ENCODE measurements at regions of chr7 and their contacts with region 1.

Region 1: GRCh38 chr7:48035301-48035966 is at the start of gene C7orf57:
- DNase-seq: peak; percentile 92
- ATAC-seq: peak; percentile 100
- H3K4me3 Mint-ChIP-seq: peak within 1 kb of the TSS; percentile 71
- H3K27ac Mint-ChIP-seq: no peak within 1 kb of the TSS
- H3K4me1 Mint-ChIP-seq: peaks cover 5% of the 10 kb centered on the region
- H3K27me3 Mint-ChIP-seq: peaks cover 36% of the 10 kb centered on the region
- total RNA-seq, gene C7orf57: 0.33 to 0.46 TPM

Region 2: GRCh38 chr7:47979145-47979831 is 56.1 kb before region 1 on chr7 and contains the start of gene HUS1:
- CTCF ChIA-PET with region 1: no interaction called
- POLR2A ChIA-PET with region 1: no interaction called
- intact Hi-C with region 1: loop called in 1 of 2 experiments (anchors 1 kb)
- DNase-seq: peak; percentile 95
- ATAC-seq: peak; percentile 98
- H3K4me3 Mint-ChIP-seq: peak within 1 kb of the TSS; percentile 88
- H3K27ac Mint-ChIP-seq: peak within 1 kb of the TSS; percentile 98
- H3K4me1 Mint-ChIP-seq: peaks cover 25% of the 10 kb centered on the region
- H3K27me3 Mint-ChIP-seq: no peaks in the 10 kb centered on the region
- total RNA-seq, gene HUS1: 40.5 to 41.5 TPM

Measured in activated CD4-positive, alpha-beta T cell treated with anti-CD3 and anti-CD28 coated beads for 36 hours (primary cell).